Heart left ventricle (tissue), 16 donors: ENCODE measurements at regions of chr22 and their contacts with region 1.

Region 1: DNA sequence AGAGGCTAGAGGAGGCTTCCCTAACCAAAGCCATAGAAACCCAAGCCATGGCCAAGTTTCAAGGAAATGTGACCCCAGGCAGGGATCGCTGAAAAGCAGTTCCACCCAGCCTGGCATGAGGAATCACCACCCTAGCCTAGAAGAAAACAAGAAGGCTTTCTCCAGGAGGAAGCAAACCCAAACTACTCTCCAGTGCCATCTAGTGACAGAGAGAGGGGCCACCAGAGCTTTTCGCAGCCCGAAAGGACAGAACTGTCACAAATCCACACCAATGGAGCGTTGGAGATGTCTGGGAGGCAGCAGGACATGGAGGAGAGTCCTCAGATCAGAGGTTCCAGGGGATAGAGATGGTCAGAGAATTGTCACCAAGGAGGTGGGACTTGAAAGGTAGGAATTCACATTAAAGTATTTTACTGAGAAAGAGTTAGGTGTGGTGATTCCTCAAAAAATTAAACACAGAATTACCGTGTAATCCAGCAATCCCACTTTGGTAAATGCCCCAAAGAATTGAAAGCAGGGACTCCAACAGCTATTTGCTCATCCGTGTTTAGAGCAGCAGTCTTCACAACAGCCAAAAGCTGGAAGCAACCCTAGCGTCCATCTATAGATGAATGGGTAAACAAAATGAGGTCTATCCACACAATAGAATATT is 67.3 kb upstream of the NUP50 start:
- DNase-seq: peak in 3 of 5 donors; percentile 28 to 42 (median 36)
- ATAC-seq: peak in 3 of 4 donors; percentile 55 to 65 (median 59)
- H3K4me3 ChIP-seq: no peak overlapping the region
- H3K27ac ChIP-seq: no peak overlapping the region
- H3K4me1 ChIP-seq: no peaks in the 10 kb centered on the region
- H3K27me3 ChIP-seq: peaks cover 0 to 80% (median 18%) of the 10 kb centered on the region in 9 donors
- CTCF ChIP-seq: peak; percentile 55 to 80 (median 68)
- POLR2A ChIP-seq: no peak

Region 2: DNA sequence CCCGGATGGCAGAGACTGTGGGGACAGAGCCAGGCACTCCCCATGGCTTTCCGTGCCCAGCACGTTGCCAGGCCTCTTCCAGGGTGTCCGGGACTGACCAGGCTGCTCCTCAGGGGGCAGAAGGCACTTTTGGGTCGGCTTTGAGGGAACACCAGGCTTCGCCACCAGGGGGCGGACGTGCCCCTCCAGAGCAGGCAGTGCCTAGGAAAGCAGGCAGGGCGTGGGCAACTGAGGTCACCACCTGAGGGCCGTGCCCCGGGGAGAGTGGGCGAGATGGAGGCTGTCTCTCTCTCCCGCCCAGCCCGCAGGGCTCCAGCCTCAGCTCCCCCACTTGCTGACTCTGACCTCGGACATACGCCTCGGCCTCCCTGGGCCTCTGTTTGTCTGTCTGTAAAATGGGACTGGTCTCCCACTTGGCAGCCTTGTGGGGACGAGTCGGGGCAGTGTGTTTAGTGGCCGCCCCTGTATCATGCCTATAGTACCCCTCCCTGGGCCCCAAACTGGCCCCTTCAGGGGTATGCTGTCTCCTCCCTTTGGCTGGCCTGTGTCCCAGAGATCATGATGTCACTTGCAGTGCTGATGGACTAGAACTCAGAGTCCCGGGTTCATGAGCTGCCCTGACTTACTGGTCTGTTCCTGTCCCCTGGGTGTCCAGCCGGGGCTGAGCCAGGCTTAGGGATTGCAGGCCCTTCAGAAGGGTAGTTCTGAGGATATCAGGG is 398.8 kb before region 1 on chr22:
- intact Hi-C with region 1: loop called in 1 of 10 experiments (anchors 10 kb)
- DNase-seq: peak; percentile 68 to 88 (median 76)
- ATAC-seq: peak in 3 of 4 donors; percentile 52 to 68 (median 63)
- H3K4me3 ChIP-seq: no peak overlapping the region
- H3K27ac ChIP-seq: no peak overlapping the region
- H3K4me1 ChIP-seq: peaks cover 0 to 23% (median 10%) of the 10 kb centered on the region in 12 donors
- H3K27me3 ChIP-seq: peaks cover 0 to 2% (median 0%) of the 10 kb centered on the region in 9 donors
- CTCF ChIP-seq: peak; percentile 85 to 97 (median 90)
- POLR2A ChIP-seq: no peak

Region 3: GRCh38 chr22:44819971-44820631 is 276.3 kb before region 1 on chr22:
- intact Hi-C with region 1: loop called in 9 of 10 experiments (anchors 1 to 5 kb)
- DNase-seq: peak in 1 of 5 donors; percentile 13
- ATAC-seq: no peak
- H3K4me3 ChIP-seq: no peak overlapping the region
- H3K27ac ChIP-seq: no peak overlapping the region
- H3K4me1 ChIP-seq: no peaks in the 10 kb centered on the region
- H3K27me3 ChIP-seq: peaks cover 0 to 16% (median 0%) of the 10 kb centered on the region in 9 donors
- CTCF ChIP-seq: no peak
- POLR2A ChIP-seq: no peak

Region 4: GRCh38 chr22:44890416-44891292 is 205.7 kb before region 1 on chr22:
- intact Hi-C with region 1: loop called in 1 of 10 experiments (anchors 10 kb)
- DNase-seq: no peak
- ATAC-seq: no peak
- H3K4me3 ChIP-seq: no peak overlapping the region
- H3K27ac ChIP-seq: no peak overlapping the region
- H3K4me1 ChIP-seq: no peaks in the 10 kb centered on the region
- H3K27me3 ChIP-seq: no peaks in the 10 kb centered on the region
- CTCF ChIP-seq: no peak
- POLR2A ChIP-seq: no peak

Region 5: GRCh38 chr22:44975427-44976262 is 120.7 kb before region 1 on chr22:
- intact Hi-C with region 1: loop called in 6 of 10 experiments (anchors 5 to 10 kb)
- DNase-seq: peak; percentile 75 to 87 (median 78)
- ATAC-seq: peak; percentile 66 to 91 (median 90)
- H3K4me3 ChIP-seq: no peak overlapping the region
- H3K27ac ChIP-seq: no peak overlapping the region
- H3K4me1 ChIP-seq: no peaks in the 10 kb centered on the region
- H3K27me3 ChIP-seq: peaks cover 0 to 8% (median 0%) of the 10 kb centered on the region in 9 donors
- CTCF ChIP-seq: peak; percentile 25 to 75 (median 56)
- POLR2A ChIP-seq: no peak

Region 6: DNA sequence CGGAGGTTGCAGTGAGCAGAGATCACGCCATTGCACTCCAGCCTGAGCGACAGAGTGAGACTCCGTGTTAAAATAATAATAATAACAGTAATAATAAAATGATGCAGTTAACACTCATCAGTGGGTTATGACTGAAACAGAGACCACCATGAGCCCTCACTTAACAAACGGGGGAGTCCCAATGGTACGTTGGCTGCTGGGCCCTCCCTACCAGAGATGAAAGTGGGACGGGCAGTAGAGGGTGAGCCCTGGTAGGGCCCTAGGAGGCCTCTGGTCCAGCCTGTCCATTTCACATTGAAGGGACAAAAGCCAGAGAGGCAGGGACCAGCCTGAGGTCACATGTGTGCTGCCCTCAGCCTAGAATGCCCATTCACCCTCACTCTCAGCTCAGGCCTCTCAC is 158.0 kb after region 1 on chr22:
- intact Hi-C with region 1: no loop called
- DNase-seq: no peak
- ATAC-seq: peak in 1 of 4 donors; percentile 31
- H3K4me3 ChIP-seq: no peak overlapping the region
- H3K27ac ChIP-seq: no peak overlapping the region
- H3K4me1 ChIP-seq: no peaks in the 10 kb centered on the region
- H3K27me3 ChIP-seq: no peaks in the 10 kb centered on the region
- CTCF ChIP-seq: no peak
- POLR2A ChIP-seq: no peak